Natural killer cell (primary cell): ENCODE measurements at regions of chr22 and their contacts with region 1.

Region 1: GRCh38 chr22:37807410-37808293 is at the start of gene GCAT:
- DNase-seq: peak; percentile 74 to 90
- ATAC-seq: peak; percentile 94 to 95 (median 95)
- H3K4me3 ChIP-seq: peak within 1 kb of the TSS; percentile 43
- H3K4me3 Mint-ChIP-seq: peak within 1 kb of the TSS; percentile 81
- H3K27ac ChIP-seq: no peak within 1 kb of the TSS
- H3K27ac Mint-ChIP-seq: no peak within 1 kb of the TSS
- H3K4me1 ChIP-seq: peaks cover 47% of the 10 kb centered on the region
- H3K4me1 Mint-ChIP-seq: peaks cover 15 to 49% of the 10 kb centered on the region in 2 donors
- H3K27me3 ChIP-seq: peaks cover 63% of the 10 kb centered on the region
- H3K27me3 Mint-ChIP-seq: peaks cover 38 to 39% of the 10 kb centered on the region in 2 donors
- CTCF ChIP-seq: no peak
- total RNA-seq, gene GCAT: 0.25 to 1.2 (median 0.28) TPM

Region 2: GRCh38 chr22:37843741-37843990 is 36.0 kb after region 1 on chr22:
- intact Hi-C with region 1: loop called (anchors 5 kb)
- DNase-seq: no peak
- ATAC-seq: peak in 2 of 3 donors; percentile 28 to 42
- H3K4me3 ChIP-seq: peak overlapping the region; percentile 43
- H3K4me3 Mint-ChIP-seq: peak overlapping the region; percentile 90
- H3K27ac ChIP-seq: peak overlapping the region; percentile 59
- H3K27ac Mint-ChIP-seq: peak overlapping the region; percentile 76 to 88
- H3K4me1 ChIP-seq: peaks cover 21% of the 10 kb centered on the region
- H3K4me1 Mint-ChIP-seq: peaks cover 12 to 17% of the 10 kb centered on the region in 2 donors
- H3K27me3 ChIP-seq: no peaks in the 10 kb centered on the region
- H3K27me3 Mint-ChIP-seq: no peaks in the 10 kb centered on the region
- CTCF ChIP-seq: no peak